ENCODE measurements at regions of chr19 and their contacts with region 1.

Region 1: DNA sequence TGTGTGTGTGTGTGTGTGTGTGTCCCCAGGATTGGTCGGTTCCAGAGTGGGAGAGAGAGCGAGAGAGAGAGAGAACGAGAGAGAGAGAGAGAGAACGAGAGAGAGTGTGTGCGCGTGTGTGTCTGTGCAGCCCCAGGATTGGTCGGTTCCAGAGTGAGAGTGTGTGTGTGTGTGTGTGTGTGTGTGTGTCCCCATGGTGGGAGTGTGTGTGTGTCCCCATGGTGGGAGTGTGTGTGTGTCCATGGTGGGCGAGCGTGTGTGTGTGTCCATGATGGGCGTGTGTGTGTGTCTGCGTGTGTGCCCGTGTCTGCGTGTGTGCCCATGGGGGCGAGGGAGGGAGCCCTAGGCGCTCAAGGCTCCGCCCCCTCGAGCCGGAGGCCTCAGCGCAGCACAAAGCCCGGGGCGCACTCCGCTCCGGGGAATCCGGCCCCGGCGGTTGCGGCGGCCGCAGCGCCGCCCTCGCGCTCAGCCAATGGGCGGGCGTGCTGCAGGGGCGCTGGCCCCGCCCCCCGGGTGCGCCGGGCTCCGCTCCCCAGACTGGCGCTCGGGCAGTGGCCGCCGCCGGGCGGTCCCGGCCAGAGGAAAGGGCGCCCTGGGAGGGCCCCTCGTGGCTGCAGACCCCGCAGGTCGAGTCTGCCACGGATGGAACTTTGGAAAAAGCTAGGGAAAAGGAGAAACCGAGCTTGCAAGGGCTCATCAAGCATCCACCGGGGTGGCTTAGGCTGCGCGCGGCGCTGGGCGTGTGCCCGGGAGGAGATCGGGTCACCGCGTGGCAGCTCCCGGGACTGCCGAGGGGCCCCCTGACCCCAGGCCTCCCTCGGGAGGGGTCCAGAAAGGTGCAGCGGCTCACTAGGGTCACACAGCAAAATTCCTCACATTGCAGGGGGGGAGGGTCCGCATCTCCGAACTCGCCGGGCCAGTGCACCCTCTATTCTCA is 96.2 kb downstream of the INSR start:
- DNase-seq: peak; percentile 91 to 96 (median 93)
- H3K4me3 ChIP-seq: peak overlapping the region in 2 of 4 donors; percentile 57 to 88
- H3K27ac ChIP-seq: peak overlapping the region; percentile 80 to 97 (median 92)
- H3K4me1 ChIP-seq: peaks cover 14 to 42% of the 10 kb centered on the region in 2 donors
- H3K27me3 ChIP-seq: no peaks in the 10 kb centered on the region
- CTCF ChIP-seq: peak in 4 of 6 experiments; percentile 40 to 59 (median 47)
- POLR2A ChIP-seq: peak; percentile 75 to 76

Region 2: DNA sequence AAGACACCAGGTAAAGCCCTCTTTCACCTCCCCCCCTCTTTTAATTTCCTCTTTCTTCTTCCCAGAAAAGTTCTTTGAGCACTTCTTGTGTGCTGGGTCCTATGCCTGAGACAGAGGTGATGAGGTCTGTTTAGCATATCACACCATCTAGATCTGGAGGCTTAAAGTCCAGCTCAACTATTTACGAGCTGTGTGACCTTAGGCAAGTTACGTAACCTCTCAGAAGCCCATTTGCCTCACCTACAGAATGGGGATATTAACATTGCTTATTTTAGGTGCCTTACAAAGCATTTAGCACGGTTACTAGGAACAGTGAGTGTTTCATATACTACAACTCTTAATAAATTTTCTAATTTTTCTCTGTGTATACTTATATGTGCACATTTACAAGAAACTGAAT is 263.0 kb before region 1 on chr19:
- intact Hi-C with region 1: no loop called
- DNase-seq: no peak
- H3K4me3 ChIP-seq: no peak overlapping the region
- H3K27ac ChIP-seq: no peak overlapping the region
- H3K4me1 ChIP-seq: no peaks in the 10 kb centered on the region
- H3K27me3 ChIP-seq: no peaks in the 10 kb centered on the region
- CTCF ChIP-seq: no peak
- POLR2A ChIP-seq: no peak

Region 3: GRCh38 chr19:6947745-6948144 is 250.3 kb before region 1 on chr19:
- intact Hi-C with region 1: no loop called
- DNase-seq: peak in 3 of 7 donors; percentile 2 to 54 (median 10)
- H3K4me3 ChIP-seq: no peak overlapping the region
- H3K27ac ChIP-seq: no peak overlapping the region
- H3K4me1 ChIP-seq: no peaks in the 10 kb centered on the region
- H3K27me3 ChIP-seq: no peaks in the 10 kb centered on the region
- CTCF ChIP-seq: no peak
- POLR2A ChIP-seq: no peak

Region 4: GRCh38 chr19:7125221-7125620 is 72.8 kb before region 1 on chr19:
- intact Hi-C with region 1: no loop called
- DNase-seq: peak in 1 of 7 donors; percentile 43
- H3K4me3 ChIP-seq: no peak overlapping the region
- H3K27ac ChIP-seq: peak overlapping the region in 1 of 5 donors; percentile 70
- H3K4me1 ChIP-seq: no peaks in the 10 kb centered on the region
- H3K27me3 ChIP-seq: no peaks in the 10 kb centered on the region
- CTCF ChIP-seq: no peak
- POLR2A ChIP-seq: no peak

Region 5: GRCh38 chr19:7145494-7146485 is 52.2 kb before region 1 on chr19:
- intact Hi-C with region 1: loop called in 1 of 2 experiments (anchors 10 kb)
- DNase-seq: peak in 2 of 7 donors; percentile 12 to 35
- H3K4me3 ChIP-seq: no peak overlapping the region
- H3K27ac ChIP-seq: peak overlapping the region in 2 of 5 donors; percentile 25 to 35
- H3K4me1 ChIP-seq: no peaks in the 10 kb centered on the region
- H3K27me3 ChIP-seq: no peaks in the 10 kb centered on the region
- CTCF ChIP-seq: no peak
- POLR2A ChIP-seq: no peak

Region 6: GRCh38 chr19:7293795-7294570 is 96.0 kb after region 1 on chr19 and contains the start of gene INSR:
- intact Hi-C with region 1: loop called in 1 of 2 experiments (anchors 5 kb)
- DNase-seq: peak; percentile 90 to 95 (median 91)
- H3K4me3 ChIP-seq: peak within 1 kb of the TSS; percentile 13 to 100 (median 78)
- H3K27ac ChIP-seq: peak within 1 kb of the TSS; percentile 31 to 95 (median 92)
- H3K4me1 ChIP-seq: peaks cover under 1 to 25% of the 10 kb centered on the region in 2 donors
- H3K27me3 ChIP-seq: no peaks in the 10 kb centered on the region
- CTCF ChIP-seq: no peak
- POLR2A ChIP-seq: peak; percentile 73 to 75
- total RNA-seq, gene INSR: 70.1 to 327 (median 110) TPM